ENCODE measurements at regions of chr19 and their contacts with region 1.

Region 1: DNA sequence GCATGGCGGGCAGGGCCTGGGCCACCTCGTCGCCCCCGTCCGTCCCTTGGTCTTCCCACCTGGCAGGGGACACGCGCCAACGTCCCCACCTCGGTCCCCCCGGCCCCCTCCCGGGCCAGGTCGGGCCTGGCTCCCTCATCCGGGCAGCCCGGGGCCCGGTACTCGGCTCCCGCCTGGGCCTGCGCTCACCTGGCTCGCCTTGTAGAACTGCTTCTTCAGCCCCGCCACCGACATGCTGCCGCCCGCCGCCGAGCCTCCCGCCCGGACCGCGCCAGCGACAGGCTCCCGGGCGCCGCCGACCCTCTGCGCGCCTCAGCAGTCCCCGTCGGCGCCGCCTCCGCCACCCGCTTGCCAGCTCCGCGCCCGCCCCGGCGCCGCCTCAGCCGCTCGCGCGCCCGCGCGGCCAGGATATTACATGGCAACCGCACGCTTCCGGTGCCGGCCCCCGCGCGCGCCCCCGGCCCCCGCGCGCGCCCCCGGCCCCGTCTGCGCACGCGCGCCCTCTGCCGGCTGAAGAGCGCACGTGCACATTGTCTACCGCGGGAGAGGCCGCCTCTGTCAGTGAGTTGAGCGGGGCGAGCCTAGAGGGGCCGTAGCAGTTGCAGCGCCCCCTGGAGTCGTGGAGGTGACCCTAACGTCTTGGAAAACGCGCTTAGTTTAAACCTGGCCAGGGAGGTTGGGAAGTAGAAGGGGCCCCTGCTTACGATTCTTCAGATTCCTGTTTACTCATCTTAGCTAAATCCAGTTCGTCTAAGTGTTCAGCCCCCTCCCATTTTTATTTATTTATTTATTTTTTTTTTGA is at the start of gene SH3GL1:
- DNase-seq: peak; percentile 92
- H3K4me3 ChIP-seq: peak within 1 kb of the TSS; percentile 94 to 95
- H3K27ac ChIP-seq: peak within 1 kb of the TSS; percentile 97 to 98
- H3K4me1 ChIP-seq: peaks cover 22% of the 10 kb centered on the region
- H3K27me3 ChIP-seq: no peaks in the 10 kb centered on the region
- CTCF ChIP-seq: peak; percentile 98 to 100 (median 98)
- POLR2A ChIP-seq: peak; percentile 49
- total RNA-seq, gene SH3GL1: 35.4 to 54.7 TPM

Region 2: GRCh38 chr19:4267101-4267900 is 133.0 kb before region 1 on chr19:
- intact Hi-C with region 1: loop called (anchors 10 kb)
- DNase-seq: peak; percentile 29
- H3K4me3 ChIP-seq: no peak overlapping the region
- H3K27ac ChIP-seq: peak overlapping the region in 1 of 2 donors; percentile 58
- H3K4me1 ChIP-seq: no peaks in the 10 kb centered on the region
- H3K27me3 ChIP-seq: no peaks in the 10 kb centered on the region
- CTCF ChIP-seq: peak; percentile 71 to 75 (median 74)
- POLR2A ChIP-seq: no peak

Region 3: GRCh38 chr19:4342615-4343369 is 57.5 kb before region 1 on chr19:
- intact Hi-C with region 1: loop called (anchors 5 kb)
- DNase-seq: peak; percentile 99
- H3K4me3 ChIP-seq: peak overlapping the region; percentile 65 to 97
- H3K27ac ChIP-seq: peak overlapping the region; percentile 93
- H3K4me1 ChIP-seq: peaks cover 5% of the 10 kb centered on the region
- H3K27me3 ChIP-seq: no peaks in the 10 kb centered on the region
- CTCF ChIP-seq: peak in 1 of 4 experiments; percentile 43
- POLR2A ChIP-seq: peak; percentile 96

Region 4: GRCh38 chr19:4373601-4374497 is 26.5 kb before region 1 on chr19:
- intact Hi-C with region 1: loop called (anchors 2 kb)
- DNase-seq: no peak
- H3K4me3 ChIP-seq: no peak overlapping the region
- H3K27ac ChIP-seq: peak overlapping the region; percentile 61 to 70
- H3K4me1 ChIP-seq: peaks cover 53% of the 10 kb centered on the region
- H3K27me3 ChIP-seq: no peaks in the 10 kb centered on the region
- CTCF ChIP-seq: no peak
- POLR2A ChIP-seq: no peak

Region 5: GRCh38 chr19:4457654-4458395 is 57.5 kb after region 1 on chr19 and contains the start of gene UBXN6:
- intact Hi-C with region 1: loop called (anchors 5 kb)
- DNase-seq: peak; percentile 99
- H3K4me3 ChIP-seq: peak within 1 kb of the TSS; percentile 74 to 88
- H3K27ac ChIP-seq: peak within 1 kb of the TSS; percentile 84 to 93
- H3K4me1 ChIP-seq: peaks cover 17% of the 10 kb centered on the region
- H3K27me3 ChIP-seq: no peaks in the 10 kb centered on the region
- CTCF ChIP-seq: peak in 1 of 4 experiments; percentile 31
- POLR2A ChIP-seq: peak; percentile 22
- total RNA-seq, gene UBXN6: 82.7 to 199 TPM

Measured in prostate gland (tissue), 2 donors.